Activated CD4-positive, alpha-beta T cell treated with anti-CD3 and anti-CD28 coated beads, Interleukin-2, amount 10 ng/mL, durations not matched to agents 24 days and 14 days (primary cell): ENCODE measurements at regions of chr1 and their contacts with region 1.

Region 1: GRCh38 chr1:37931361-37932158 is 15.3 kb downstream of the INPP5B start:
- DNase-seq: peak; percentile 99
- H3K4me3 Mint-ChIP-seq: peak overlapping the region; percentile 90
- H3K27ac Mint-ChIP-seq: peak overlapping the region; percentile 85
- H3K4me1 Mint-ChIP-seq: peaks cover 27% of the 10 kb centered on the region
- H3K27me3 Mint-ChIP-seq: no peaks in the 10 kb centered on the region

Region 2: GRCh38 chr1:37859507-37860345 is 71.8 kb before region 1 on chr1 and contains the start of gene MTF1:
- intact Hi-C with region 1: loop called (anchors 2 kb)
- DNase-seq: peak; percentile 99
- H3K4me3 Mint-ChIP-seq: peak within 1 kb of the TSS; percentile 89
- H3K27ac Mint-ChIP-seq: peak within 1 kb of the TSS; percentile 96
- H3K4me1 Mint-ChIP-seq: peaks cover 28% of the 10 kb centered on the region
- H3K27me3 Mint-ChIP-seq: no peaks in the 10 kb centered on the region
- total RNA-seq, gene MTF1: 31.2 and 31.6 TPM in 2 replicates

Region 3: DNA sequence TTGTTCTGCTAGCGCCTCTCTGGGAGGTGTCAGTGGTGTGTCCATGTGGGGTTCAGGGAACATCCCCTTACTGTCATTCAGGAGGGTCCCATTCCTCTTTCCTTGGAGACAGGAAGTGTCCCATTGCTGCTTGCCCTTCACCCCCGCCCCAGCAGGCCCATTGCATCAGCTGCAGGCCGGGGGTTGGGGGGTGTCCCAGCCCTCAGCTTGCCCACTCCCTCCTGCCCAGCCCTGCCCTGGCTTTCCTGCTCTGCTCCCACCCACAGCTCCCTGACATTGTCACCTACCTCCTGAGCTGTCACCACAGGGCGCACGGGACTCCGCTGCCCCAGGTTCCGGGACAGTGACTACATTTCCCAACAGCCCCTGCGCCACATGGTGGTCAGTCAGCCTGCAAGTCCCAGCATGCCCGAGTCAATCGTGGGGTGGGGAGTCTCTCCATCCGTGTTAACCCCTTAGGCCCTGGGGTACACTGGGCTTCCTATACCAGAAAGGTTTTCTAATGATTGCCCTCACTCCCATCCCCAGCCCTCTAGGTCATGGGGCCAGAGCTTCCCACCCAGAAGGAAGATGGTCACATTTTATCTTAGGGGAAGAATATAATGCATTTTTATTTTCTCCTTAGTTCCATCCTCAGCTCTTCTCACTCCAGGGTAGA is 15.3 kb after region 1 on chr1 and contains the start of gene INPP5B:
- intact Hi-C with region 1: loop called (anchors 1 kb)
- DNase-seq: peak; percentile 93
- H3K4me3 Mint-ChIP-seq: peak within 1 kb of the TSS; percentile 96
- H3K27ac Mint-ChIP-seq: peak within 1 kb of the TSS; percentile 99
- H3K4me1 Mint-ChIP-seq: peaks cover 13% of the 10 kb centered on the region
- H3K27me3 Mint-ChIP-seq: no peaks in the 10 kb centered on the region
- total RNA-seq, gene INPP5B: 23.8 and 27.2 TPM in 2 replicates

Region 4: GRCh38 chr1:37995751-37996345 is 64.3 kb after region 1 on chr1:
- intact Hi-C with region 1: loop called (anchors 5 kb)
- DNase-seq: peak; percentile 78
- H3K4me3 Mint-ChIP-seq: peak overlapping the region; percentile 84
- H3K27ac Mint-ChIP-seq: peak overlapping the region; percentile 80
- H3K4me1 Mint-ChIP-seq: peaks cover 44% of the 10 kb centered on the region
- H3K27me3 Mint-ChIP-seq: no peaks in the 10 kb centered on the region

Region 5: DNA sequence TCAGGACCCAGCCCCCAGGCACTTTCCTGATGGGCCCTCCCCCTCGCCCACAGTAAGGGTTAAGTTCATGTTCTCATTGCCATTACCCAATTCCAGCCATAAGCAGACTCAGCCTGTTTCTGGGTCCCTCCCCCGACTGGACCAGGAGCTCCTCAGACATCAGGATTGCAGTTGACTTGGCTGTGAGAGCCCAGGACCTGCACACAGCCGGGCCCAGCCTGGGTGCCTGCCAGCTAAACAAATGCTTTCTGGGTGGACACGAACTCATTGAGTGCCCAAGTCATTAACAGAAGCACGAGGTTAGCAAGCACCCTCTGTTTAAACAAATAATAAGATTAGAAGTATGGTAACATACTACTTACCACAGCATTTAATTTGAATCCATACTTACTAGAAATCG is 262.9 kb after region 1 on chr1:
- intact Hi-C with region 1: no loop called
- DNase-seq: no peak
- H3K4me3 Mint-ChIP-seq: no peak overlapping the region
- H3K27ac Mint-ChIP-seq: no peak overlapping the region
- H3K4me1 Mint-ChIP-seq: no peaks in the 10 kb centered on the region
- H3K27me3 Mint-ChIP-seq: peaks cover 16% of the 10 kb centered on the region